ENCODE measurements at regions of chr7 and their contacts with region 1.

Region 1: DNA sequence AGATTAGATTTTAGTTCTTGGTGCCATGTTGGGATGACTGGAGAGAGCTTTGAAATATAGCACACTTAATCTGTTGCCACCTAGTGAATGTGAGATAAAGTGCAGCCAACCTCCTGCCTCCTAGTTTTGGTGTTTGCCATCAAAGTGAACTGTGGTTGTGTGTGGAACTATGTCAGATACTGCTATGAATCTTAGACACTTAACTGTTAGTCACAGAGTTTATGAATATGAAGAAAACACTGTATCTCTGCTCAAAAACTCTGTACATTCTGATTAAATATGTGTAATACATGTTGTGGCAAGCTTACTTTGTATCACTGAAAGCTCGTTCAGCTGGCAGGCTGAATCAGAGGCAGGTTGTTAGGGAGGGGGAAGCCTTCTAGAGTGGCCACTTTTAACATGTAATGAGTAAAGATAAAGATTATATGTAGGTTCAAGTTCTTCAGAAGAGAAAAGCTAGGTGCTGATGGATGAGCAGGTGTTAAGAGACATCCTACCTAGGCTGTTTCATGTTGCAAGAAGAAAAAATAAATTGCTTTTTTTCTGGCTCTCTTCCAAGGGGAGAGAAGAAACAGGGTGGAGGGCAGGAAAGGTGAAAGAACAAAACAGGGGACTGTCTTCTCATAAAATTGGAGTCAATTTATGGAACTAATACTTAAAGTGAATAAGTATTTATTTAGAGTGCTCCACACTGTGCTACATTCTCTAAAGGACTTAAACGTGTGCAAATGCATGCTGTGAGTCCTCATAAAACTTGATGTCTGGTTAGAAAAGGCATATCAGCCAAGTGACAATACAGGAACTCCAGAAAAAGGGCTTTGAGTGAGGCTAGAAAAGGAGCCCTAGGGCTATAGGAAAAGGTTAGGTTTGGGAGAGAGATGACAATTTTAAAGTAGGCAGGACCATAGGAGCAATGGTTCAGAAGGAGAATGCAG is 14.1 kb upstream of the LAMB1 start:
- DNase-seq: peak; percentile 65
- H3K4me3 Mint-ChIP-seq: no peak overlapping the region
- H3K27ac Mint-ChIP-seq: no peak overlapping the region
- H3K4me1 Mint-ChIP-seq: peaks cover 11% of the 10 kb centered on the region
- H3K27me3 Mint-ChIP-seq: no peaks in the 10 kb centered on the region
- CTCF ChIP-seq: peak; percentile 40

Region 2: GRCh38 chr7:107890962-107891635 is 126.0 kb before region 1 on chr7 and contains the start of gene DLD:
- CTCF ChIA-PET with region 1: interaction called, 4 read pairs
- POLR2A ChIA-PET with region 1: interaction called, 4 read pairs
- intact Hi-C with region 1: loop called (anchors 10 kb)
- DNase-seq: peak; percentile 88
- H3K4me3 Mint-ChIP-seq: peak within 1 kb of the TSS; percentile 86
- H3K27ac Mint-ChIP-seq: peak within 1 kb of the TSS; percentile 95
- H3K4me1 Mint-ChIP-seq: peaks cover 26% of the 10 kb centered on the region
- H3K27me3 Mint-ChIP-seq: peaks cover 2% of the 10 kb centered on the region
- CTCF ChIP-seq: no peak
- total RNA-seq, gene DLD: 83.0 and 85.7 TPM in 2 replicates

Region 3: DNA sequence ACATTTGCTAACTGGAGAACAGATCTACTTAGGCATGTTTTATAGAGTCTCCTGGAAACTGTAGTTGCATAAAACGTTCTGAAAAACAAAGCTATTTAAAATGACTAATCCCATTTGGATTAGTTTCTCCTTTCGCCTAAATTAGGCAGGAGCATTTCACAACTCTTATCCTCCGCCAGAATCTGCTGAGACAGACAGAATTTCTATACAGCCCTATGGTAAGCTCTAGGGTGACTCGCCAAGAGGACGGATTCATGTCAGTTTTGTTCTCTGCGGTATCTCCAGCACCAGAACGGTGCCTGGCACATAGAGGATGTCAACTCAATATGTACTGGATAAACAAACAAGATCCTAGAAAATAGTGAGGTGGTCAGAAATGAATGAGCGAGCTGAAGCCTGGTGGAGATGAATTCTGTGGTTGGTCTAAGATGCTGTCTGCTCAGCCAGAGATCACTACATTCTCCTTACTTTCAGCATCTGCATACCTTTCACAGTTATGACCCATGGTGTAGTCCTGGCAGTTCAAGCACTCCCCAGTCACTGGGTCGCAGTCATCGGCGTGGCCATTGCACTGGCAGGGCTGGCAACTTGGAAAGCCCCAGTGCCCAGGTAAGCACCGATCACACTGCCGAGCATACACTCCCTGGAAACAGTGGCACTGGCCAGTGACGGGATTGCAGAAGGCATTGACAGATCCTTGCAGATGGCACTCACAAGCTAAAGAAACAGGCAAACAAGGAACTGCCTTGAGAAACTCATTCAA is 58.2 kb before region 1 on chr7:
- CTCF ChIA-PET with region 1: interaction called, 5 read pairs
- POLR2A ChIA-PET with region 1: interaction called, 11 read pairs
- intact Hi-C with region 1: no loop called
- DNase-seq: peak; percentile 92
- H3K4me3 Mint-ChIP-seq: no peak overlapping the region
- H3K27ac Mint-ChIP-seq: peak overlapping the region; percentile 91
- H3K4me1 Mint-ChIP-seq: peaks cover 27% of the 10 kb centered on the region
- H3K27me3 Mint-ChIP-seq: no peaks in the 10 kb centered on the region
- CTCF ChIP-seq: no peak

Region 4: GRCh38 chr7:107966711-107967110 is 50.4 kb before region 1 on chr7:
- CTCF ChIA-PET with region 1: interaction called, 11 read pairs
- POLR2A ChIA-PET with region 1: interaction called, 33 read pairs
- intact Hi-C with region 1: no loop called
- DNase-seq: peak; percentile 75
- H3K4me3 Mint-ChIP-seq: no peak overlapping the region
- H3K27ac Mint-ChIP-seq: no peak overlapping the region
- H3K4me1 Mint-ChIP-seq: peaks cover 17% of the 10 kb centered on the region
- H3K27me3 Mint-ChIP-seq: no peaks in the 10 kb centered on the region
- CTCF ChIP-seq: no peak

Region 5: GRCh38 chr7:107972075-107972482 is 45.0 kb before region 1 on chr7:
- CTCF ChIA-PET with region 1: interaction called, 11 read pairs
- POLR2A ChIA-PET with region 1: interaction called, 33 read pairs
- intact Hi-C with region 1: no loop called
- DNase-seq: peak; percentile 91
- H3K4me3 Mint-ChIP-seq: peak overlapping the region; percentile 36
- H3K27ac Mint-ChIP-seq: peak overlapping the region; percentile 88
- H3K4me1 Mint-ChIP-seq: peaks cover 36% of the 10 kb centered on the region
- H3K27me3 Mint-ChIP-seq: no peaks in the 10 kb centered on the region
- CTCF ChIP-seq: no peak

Region 6: DNA sequence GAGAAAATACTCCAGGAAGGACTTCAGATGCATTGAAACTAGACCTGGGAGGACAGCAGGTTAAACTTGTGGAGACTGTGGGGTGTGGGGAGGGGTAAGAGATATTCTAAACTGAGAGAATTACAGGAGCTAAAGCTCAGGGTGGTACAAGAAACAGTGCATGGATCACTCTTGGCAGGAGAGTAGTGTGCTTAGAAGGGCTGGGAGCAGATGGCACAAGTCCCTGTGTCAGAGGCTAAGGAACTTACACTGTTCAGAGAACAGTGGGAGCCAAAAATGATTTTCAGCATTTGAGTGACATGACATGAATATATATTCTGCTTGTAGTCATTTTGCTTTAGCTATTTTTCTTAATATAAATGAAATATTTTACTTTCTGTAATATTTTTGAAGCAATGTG is 21.9 kb after region 1 on chr7:
- CTCF ChIA-PET with region 1: interaction called, 11 read pairs
- POLR2A ChIA-PET with region 1: interaction called, 3 read pairs
- intact Hi-C with region 1: no loop called
- DNase-seq: no peak
- H3K4me3 Mint-ChIP-seq: no peak overlapping the region
- H3K27ac Mint-ChIP-seq: no peak overlapping the region
- H3K4me1 Mint-ChIP-seq: no peaks in the 10 kb centered on the region
- H3K27me3 Mint-ChIP-seq: no peaks in the 10 kb centered on the region
- CTCF ChIP-seq: no peak

Region 7: GRCh38 chr7:108063520-108063933 is 46.4 kb after region 1 on chr7:
- CTCF ChIA-PET with region 1: no interaction called
- POLR2A ChIA-PET with region 1: interaction called, 17 read pairs
- intact Hi-C with region 1: no loop called
- DNase-seq: peak; percentile 73
- H3K4me3 Mint-ChIP-seq: no peak overlapping the region
- H3K27ac Mint-ChIP-seq: peak overlapping the region; percentile 16
- H3K4me1 Mint-ChIP-seq: peaks cover 11% of the 10 kb centered on the region
- H3K27me3 Mint-ChIP-seq: no peaks in the 10 kb centered on the region
- CTCF ChIP-seq: no peak

Measured in MCF 10A (cell line).